ENCODE measurements at regions of chr2 and their contacts with region 1.

Region 1: GRCh38 chr2:172084734-172085459 is 410 bp upstream of the DLX1 start:
- DNase-seq: peak; percentile 87
- H3K4me3 ChIP-seq: peak overlapping the region; percentile 63
- H3K27ac ChIP-seq: peak overlapping the region; percentile 61
- H3K27me3 ChIP-seq: peaks cover 88% of the 10 kb centered on the region
- CTCF ChIP-seq: no peak

Region 2: DNA sequence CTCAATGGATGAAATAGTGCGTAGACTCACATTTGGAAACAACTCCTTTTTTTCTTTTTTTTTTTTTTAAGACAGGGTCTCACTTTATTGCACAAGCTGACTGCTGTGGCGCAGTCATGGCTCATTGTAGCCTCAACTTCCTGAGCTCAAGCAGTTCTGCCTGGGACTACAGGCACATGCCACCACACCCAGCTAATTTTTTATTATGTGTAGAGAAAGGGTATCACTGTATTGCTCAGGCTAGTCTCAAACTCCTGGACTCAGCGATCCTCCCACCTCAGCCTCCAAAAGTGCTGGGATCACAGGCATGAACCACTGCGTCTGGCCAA is 145.2 kb before region 1 on chr2:
- CTCF ChIA-PET with region 1: no interaction called
- POLR2A ChIA-PET with region 1: no interaction called
- DNase-seq: no peak
- H3K4me3 ChIP-seq: no peak overlapping the region
- H3K27ac ChIP-seq: no peak overlapping the region
- H3K27me3 ChIP-seq: no peaks in the 10 kb centered on the region
- CTCF ChIP-seq: no peak

Region 3: GRCh38 chr2:172095146-172095904 is 10.4 kb after region 1 on chr2:
- CTCF ChIA-PET with region 1: interaction called, 6 read pairs
- POLR2A ChIA-PET with region 1: interaction called, 24 read pairs
- DNase-seq: peak; percentile 51
- H3K4me3 ChIP-seq: peak overlapping the region; percentile 63
- H3K27ac ChIP-seq: peak overlapping the region; percentile 70
- H3K27me3 ChIP-seq: peaks cover 35% of the 10 kb centered on the region
- CTCF ChIP-seq: no peak

Region 4: GRCh38 chr2:172131713-172132555 is 47.0 kb after region 1 on chr2:
- CTCF ChIA-PET with region 1: no interaction called
- POLR2A ChIA-PET with region 1: no interaction called
- DNase-seq: no peak
- H3K4me3 ChIP-seq: no peak overlapping the region
- H3K27ac ChIP-seq: no peak overlapping the region
- H3K27me3 ChIP-seq: peaks cover 3% of the 10 kb centered on the region
- CTCF ChIP-seq: no peak

Measured in AG04450 (cell line).